Right cardiac atrium (tissue), 5 donors: ENCODE measurements at regions of chr22 and their contacts with region 1.

Region 1: GRCh38 chr22:39170825-39171622 is 18.5 kb upstream of the CBX7 start:
- DNase-seq: peak; percentile 85 to 94 (median 93)
- ATAC-seq: peak; percentile 82 to 84
- H3K4me3 ChIP-seq: no peak overlapping the region
- H3K27ac ChIP-seq: no peak overlapping the region
- H3K4me1 ChIP-seq: peaks cover 27% of the 10 kb centered on the region
- H3K27me3 ChIP-seq: no peaks in the 10 kb centered on the region

Region 2: DNA sequence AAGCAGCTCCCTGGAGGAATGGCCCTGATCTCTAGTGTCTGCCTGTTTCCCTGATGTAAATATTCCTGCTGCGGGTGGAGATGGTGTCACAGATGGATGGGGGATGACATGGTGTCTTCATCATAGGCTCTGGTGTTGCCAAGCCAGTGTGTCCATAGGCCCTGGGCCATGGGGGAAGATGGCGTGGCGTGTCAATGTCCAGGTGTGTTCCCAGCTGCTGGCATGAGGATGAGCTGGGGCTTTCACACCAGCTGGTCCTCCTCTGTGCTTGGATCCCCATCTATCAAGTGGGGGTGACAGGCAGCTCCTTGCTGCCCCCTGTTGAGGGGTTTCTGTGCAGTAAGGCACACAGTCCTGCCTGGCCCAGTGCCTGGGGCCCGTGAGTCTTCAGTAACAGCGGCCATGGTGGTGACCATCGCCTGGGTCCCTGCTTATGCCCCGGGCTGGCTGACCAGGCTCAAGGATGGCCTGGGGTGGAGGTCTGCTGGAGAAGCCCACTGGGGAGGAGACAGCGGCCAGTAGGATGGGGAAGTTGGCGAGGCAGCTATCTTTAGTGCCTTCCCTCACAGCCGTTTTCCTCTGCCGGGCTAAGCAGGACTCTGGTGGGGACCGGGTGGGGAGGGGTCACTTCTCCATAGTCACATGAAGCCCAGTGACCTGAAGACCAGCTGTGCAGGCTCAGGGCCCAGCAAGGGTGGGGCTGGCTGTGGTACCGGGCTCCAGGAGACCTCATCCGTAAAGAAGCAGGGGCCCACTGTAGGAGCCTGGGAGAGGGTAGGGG is 135.7 kb after region 1 on chr22:
- intact Hi-C with region 1: loop called in 3 of 4 experiments (anchors 2 to 5 kb)
- DNase-seq: peak in 2 of 3 donors; percentile 75 to 79
- ATAC-seq: no peak
- H3K4me3 ChIP-seq: no peak overlapping the region
- H3K27ac ChIP-seq: no peak overlapping the region
- H3K4me1 ChIP-seq: peaks cover 5% of the 10 kb centered on the region
- H3K27me3 ChIP-seq: no peaks in the 10 kb centered on the region

Region 3: DNA sequence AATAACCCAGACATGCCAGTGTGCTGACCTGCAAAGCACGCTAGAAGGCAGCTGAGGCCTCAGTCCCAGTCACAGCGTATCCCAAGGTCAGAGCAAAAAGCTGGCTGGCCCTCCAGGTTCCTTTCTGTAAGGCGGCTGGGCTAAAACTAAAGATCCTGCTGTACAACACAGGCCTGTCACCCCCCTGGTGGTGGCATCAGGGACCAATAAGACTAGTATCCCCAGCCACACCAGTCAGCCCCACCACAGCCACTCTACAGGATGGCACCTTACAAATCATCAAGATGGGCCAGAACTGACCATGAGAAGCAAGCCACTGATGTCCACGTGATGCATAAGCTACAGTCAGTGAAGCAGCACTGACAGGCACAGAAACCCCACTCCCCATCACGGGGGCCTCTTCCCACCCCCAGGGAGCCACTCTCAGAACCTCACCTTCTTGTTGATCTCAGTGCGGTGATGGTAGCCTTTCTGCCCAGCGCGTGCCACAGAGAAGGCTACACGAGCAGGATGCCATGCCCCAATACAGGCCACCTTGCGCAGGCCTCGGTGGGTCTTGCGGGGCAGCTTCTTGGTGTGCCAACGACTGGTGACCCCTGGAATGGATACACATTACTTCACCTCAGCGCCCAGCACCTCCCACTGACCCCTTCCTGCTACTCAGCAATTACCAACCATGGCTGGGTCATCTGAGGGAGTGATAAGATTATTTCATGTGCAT is 143.4 kb after region 1 on chr22:
- intact Hi-C with region 1: loop called (anchors 2 to 5 kb)
- DNase-seq: peak in 2 of 3 donors; percentile 45 to 60
- ATAC-seq: no peak
- H3K4me3 ChIP-seq: no peak overlapping the region
- H3K27ac ChIP-seq: peak overlapping the region; percentile 63
- H3K4me1 ChIP-seq: peaks cover 11% of the 10 kb centered on the region
- H3K27me3 ChIP-seq: no peaks in the 10 kb centered on the region